Sigmoid colon (tissue), 7 donors: ENCODE measurements at regions of chr2 and their contacts with region 1.

Region 1: GRCh38 chr2:21042958-21043743 is 722 bp downstream of the APOB start:
- DNase-seq: peak; percentile 77
- H3K4me3 ChIP-seq: peak overlapping the region in 3 of 4 donors; percentile 8 to 38 (median 25)
- H3K27ac ChIP-seq: peak overlapping the region; percentile 39 to 86 (median 64)
- H3K4me1 ChIP-seq: peaks cover 0 to 32% (median 22%) of the 10 kb centered on the region in 4 donors
- H3K27me3 ChIP-seq: peaks cover 0 to 3% (median 0%) of the 10 kb centered on the region in 3 donors
- CTCF ChIP-seq: peak; percentile 82 to 100 (median 96)
- EP300 ChIP-seq: no peak
- POLR2A ChIP-seq: no peak

Region 2: DNA sequence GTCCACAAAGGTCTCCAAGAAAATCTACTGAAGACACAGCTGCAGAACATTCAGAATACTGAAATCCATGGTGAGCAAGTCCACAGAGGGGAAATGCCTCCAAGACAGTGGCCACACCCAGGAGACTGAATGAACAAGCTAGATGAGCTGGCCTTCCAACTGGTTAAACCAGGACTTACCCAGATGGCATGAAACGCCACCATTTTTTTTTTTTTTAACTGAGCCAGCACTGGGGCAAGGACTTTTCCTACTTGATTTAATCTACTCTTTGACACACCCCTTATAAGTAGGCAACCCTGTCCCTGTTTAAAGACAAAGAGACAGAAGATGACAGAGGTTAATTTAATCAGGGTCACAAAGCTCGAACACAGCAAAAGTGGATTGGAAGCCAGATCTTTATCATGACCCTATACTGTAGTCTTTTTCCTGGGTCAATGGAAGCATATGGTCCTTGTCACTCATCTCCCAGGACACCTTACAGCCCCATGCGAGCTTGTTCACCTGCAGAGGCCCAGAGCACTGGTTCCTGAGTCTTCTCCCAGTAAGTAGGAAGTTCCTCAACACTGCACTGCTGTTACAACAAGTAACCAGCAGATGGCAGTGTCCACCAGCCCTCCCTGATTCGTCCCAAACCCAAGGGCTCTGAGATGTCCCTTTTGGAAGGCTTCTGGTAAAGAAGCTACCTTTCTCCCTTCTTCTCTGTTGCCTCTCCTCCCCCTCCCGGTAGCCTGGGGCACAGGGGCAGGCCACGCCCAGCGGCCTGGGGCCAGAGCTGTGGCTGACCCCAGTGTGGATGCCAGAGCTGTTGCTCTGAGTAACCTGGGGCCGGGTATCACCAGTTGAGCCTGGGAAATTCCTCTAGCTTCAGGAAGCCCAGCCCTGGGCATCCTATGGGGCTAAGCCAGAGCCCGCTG is 381.8 kb before region 1 on chr2:
- intact Hi-C with region 1: loop called (anchors 5 kb)
- DNase-seq: peak; percentile 85
- H3K4me3 ChIP-seq: no peak overlapping the region
- H3K27ac ChIP-seq: no peak overlapping the region
- H3K4me1 ChIP-seq: peaks cover 0 to 25% (median 18%) of the 10 kb centered on the region in 4 donors
- H3K27me3 ChIP-seq: peaks cover 19 to 51% (median 21%) of the 10 kb centered on the region in 3 donors
- CTCF ChIP-seq: peak; percentile 90 to 97 (median 92)
- EP300 ChIP-seq: no peak
- POLR2A ChIP-seq: no peak

Region 3: DNA sequence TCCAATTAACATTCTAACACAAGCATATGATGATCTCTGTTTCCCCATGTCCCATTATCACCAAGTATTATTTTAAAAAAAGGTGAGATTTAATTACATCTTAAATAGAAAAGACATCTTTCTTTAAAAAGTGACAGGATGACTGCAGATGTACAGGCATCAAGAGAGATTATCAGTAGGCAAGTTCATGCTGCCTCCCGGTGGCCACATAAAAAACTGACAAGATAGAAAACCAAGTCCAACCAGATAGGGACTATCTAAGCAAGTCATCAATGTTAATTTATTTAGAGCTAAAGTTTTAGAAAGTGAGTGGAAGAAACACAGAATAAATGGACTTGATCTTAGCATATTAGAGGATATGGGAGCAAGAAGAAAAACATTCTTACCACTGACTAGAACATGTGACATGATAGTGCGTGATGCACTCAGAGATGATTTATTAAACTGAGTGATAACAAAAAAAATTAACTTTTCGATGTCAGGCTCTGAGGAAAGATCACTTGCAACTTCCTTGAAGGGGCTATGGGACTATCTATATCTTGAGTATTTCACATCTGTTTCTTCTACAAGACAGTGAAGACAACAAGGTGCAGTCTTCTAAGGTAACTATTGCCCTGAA is 75.3 kb after region 1 on chr2:
- intact Hi-C with region 1: loop called (anchors 1 kb)
- DNase-seq: no peak
- H3K4me3 ChIP-seq: no peak overlapping the region
- H3K27ac ChIP-seq: no peak overlapping the region
- H3K4me1 ChIP-seq: no peaks in the 10 kb centered on the region
- H3K27me3 ChIP-seq: no peaks in the 10 kb centered on the region
- CTCF ChIP-seq: peak in 3 of 4 experiments; percentile 41 to 53 (median 45)
- EP300 ChIP-seq: no peak
- POLR2A ChIP-seq: no peak

Region 4: GRCh38 chr2:21317131-21317530 is 274.0 kb after region 1 on chr2:
- intact Hi-C with region 1: loop called (anchors 2 kb)
- DNase-seq: peak; percentile 64
- H3K4me3 ChIP-seq: no peak overlapping the region
- H3K27ac ChIP-seq: no peak overlapping the region
- H3K4me1 ChIP-seq: peaks cover 0 to 5% (median 0%) of the 10 kb centered on the region in 4 donors
- H3K27me3 ChIP-seq: no peaks in the 10 kb centered on the region
- CTCF ChIP-seq: peak in 3 of 4 experiments; percentile 47 to 65 (median 50)
- EP300 ChIP-seq: no peak
- POLR2A ChIP-seq: no peak